Heart right ventricle (tissue), 16 donors: ENCODE measurements at regions of chr2 and their contacts with region 1.

Region 1: GRCh38 chr2:177169810-177170514 is 42.6 kb upstream of the HNRNPA3 start:
- DNase-seq: no peak
- ATAC-seq: no peak
- H3K4me3 ChIP-seq: no peak overlapping the region
- H3K27ac ChIP-seq: peak overlapping the region in 3 of 10 donors; percentile 34 to 61 (median 35)
- H3K4me1 ChIP-seq: peaks cover 8 to 57% (median 22%) of the 10 kb centered on the region in 9 donors
- H3K27me3 ChIP-seq: no peaks in the 10 kb centered on the region
- CTCF ChIP-seq: no peak

Region 2: DNA sequence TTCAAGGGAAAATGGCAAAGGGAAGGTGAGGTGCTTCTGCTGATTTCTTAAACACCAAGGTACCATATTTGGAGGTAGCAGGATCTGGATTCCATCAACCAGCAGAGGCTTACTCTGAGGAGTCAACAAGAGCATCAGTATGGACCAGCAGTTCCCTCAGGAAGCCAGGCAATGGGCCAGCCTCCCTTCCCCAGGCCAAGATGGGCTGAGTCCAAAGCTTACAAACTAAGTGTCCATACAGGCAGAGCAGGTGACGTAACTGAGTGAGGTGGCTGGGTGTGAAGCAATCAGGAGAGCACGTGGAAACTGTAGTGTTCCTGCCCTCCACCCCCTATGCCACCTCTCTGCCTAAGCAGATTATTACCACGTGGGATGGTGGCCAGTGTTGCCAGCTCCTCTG is 91.5 kb before region 1 on chr2:
- intact Hi-C with region 1: no loop called
- DNase-seq: peak in 1 of 2 donors; percentile 19
- ATAC-seq: peak in 2 of 8 donors; percentile 50 to 53
- H3K4me3 ChIP-seq: no peak overlapping the region
- H3K27ac ChIP-seq: no peak overlapping the region
- H3K4me1 ChIP-seq: no peaks in the 10 kb centered on the region
- H3K27me3 ChIP-seq: peaks cover 0 to 12% (median 5%) of the 10 kb centered on the region in 7 donors
- CTCF ChIP-seq: no peak

Region 3: GRCh38 chr2:177207101-177207500 is 37.1 kb after region 1 on chr2:
- intact Hi-C with region 1: loop called in 8 of 10 experiments (anchors 1 to 5 kb)
- DNase-seq: no peak
- ATAC-seq: peak in 1 of 8 donors; percentile 26
- H3K4me3 ChIP-seq: no peak overlapping the region
- H3K27ac ChIP-seq: no peak overlapping the region
- H3K4me1 ChIP-seq: peaks cover 0 to 19% (median 12%) of the 10 kb centered on the region in 9 donors
- H3K27me3 ChIP-seq: no peaks in the 10 kb centered on the region
- CTCF ChIP-seq: no peak